HepG2 (cell line): ENCODE measurements at regions of chr1 and their contacts with region 1.

Region 1: DNA sequence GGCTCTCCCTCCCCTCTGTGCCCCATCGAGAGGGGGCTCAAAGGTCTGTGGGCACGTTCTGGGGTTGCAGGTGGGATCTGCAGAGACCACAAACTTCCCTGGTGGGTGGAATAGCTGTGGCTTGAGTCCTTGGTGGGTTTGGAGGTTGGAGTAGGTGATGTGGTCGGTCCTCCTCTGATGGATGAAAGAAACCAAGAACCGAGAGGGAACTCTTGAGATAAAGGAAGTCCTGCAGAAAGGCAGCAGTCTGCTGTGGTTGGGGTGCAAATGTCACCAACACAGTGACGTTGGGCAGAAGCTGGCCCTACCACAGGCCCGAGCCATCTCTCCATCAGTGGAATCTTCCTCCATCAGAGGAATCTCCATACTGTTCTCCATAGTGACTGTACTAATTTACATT is 171.8 kb downstream of the FCRL5 start:
- DNase-seq: no peak
- ATAC-seq: no peak
- H3K4me3 ChIP-seq: no peak overlapping the region
- H3K27ac ChIP-seq: no peak overlapping the region
- H3K4me1 ChIP-seq: no peaks in the 10 kb centered on the region
- H3K27me3 ChIP-seq: no peaks in the 10 kb centered on the region
- CTCF ChIP-seq: no peak
- EP300 ChIP-seq: no peak
- POLR2A ChIP-seq: no peak
- RAD21 ChIP-seq: no peak

Region 2: GRCh38 chr1:157325220-157325619 is 55.3 kb before region 1 on chr1:
- CTCF ChIA-PET with region 1: no interaction called
- POLR2A ChIA-PET with region 1: no interaction called
- in situ Hi-C with region 1: no loop called
- intact Hi-C with region 1: no loop called
- DNase-seq: no peak
- ATAC-seq: no peak
- H3K4me3 ChIP-seq: no peak overlapping the region
- H3K27ac ChIP-seq: no peak overlapping the region
- H3K4me1 ChIP-seq: no peaks in the 10 kb centered on the region
- H3K27me3 ChIP-seq: no peaks in the 10 kb centered on the region
- CTCF ChIP-seq: no peak
- EP300 ChIP-seq: no peak
- POLR2A ChIP-seq: no peak
- RAD21 ChIP-seq: no peak

Region 3: DNA sequence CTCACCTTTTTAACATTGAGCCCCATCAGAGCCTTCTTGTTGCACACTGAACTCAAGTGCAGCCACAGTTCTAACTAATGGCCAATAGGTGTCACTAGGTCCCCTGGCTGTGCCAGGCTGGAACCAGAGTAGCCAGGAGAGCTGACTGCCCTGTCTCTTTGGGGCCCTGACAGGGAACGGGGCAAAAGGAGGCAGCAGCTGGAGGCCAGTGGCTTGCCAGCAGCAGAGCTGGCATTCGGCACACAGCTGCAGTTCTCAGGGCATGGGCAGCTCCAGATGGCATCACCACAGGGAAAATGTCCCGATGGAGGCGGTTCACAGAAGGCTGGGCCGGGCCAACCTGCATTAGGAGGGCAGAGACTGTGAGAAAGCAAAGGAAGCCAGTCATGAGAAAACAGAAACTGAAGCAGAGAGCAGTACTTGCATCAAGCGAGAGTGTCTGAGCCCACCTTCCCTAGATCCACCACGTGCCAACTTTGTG is 16.8 kb before region 1 on chr1:
- CTCF ChIA-PET with region 1: no interaction called
- POLR2A ChIA-PET with region 1: no interaction called
- in situ Hi-C with region 1: no loop called
- intact Hi-C with region 1: loop called (anchors 1 kb)
- DNase-seq: peak; percentile 41
- ATAC-seq: peak; percentile 99
- H3K4me3 ChIP-seq: no peak overlapping the region
- H3K27ac ChIP-seq: no peak overlapping the region
- H3K4me1 ChIP-seq: peaks cover 7% of the 10 kb centered on the region; the same call in 1 of the 2 replicates
- H3K27me3 ChIP-seq: no peaks in the 10 kb centered on the region
- CTCF ChIP-seq: peak; percentile 75
- EP300 ChIP-seq: no peak
- POLR2A ChIP-seq: no peak
- RAD21 ChIP-seq: no peak